ENCODE measurements at regions of chr11 and their contacts with region 1.

Region 1: GRCh38 chr11:9015677-9016076 is 11.9 kb upstream of the NRIP3 start:
- DNase-seq: peak; percentile 65
- H3K4me3 Mint-ChIP-seq: no peak overlapping the region
- H3K27ac Mint-ChIP-seq: no peak overlapping the region
- H3K4me1 Mint-ChIP-seq: peaks cover 24% of the 10 kb centered on the region
- H3K27me3 Mint-ChIP-seq: peaks cover 14% of the 10 kb centered on the region

Region 2: DNA sequence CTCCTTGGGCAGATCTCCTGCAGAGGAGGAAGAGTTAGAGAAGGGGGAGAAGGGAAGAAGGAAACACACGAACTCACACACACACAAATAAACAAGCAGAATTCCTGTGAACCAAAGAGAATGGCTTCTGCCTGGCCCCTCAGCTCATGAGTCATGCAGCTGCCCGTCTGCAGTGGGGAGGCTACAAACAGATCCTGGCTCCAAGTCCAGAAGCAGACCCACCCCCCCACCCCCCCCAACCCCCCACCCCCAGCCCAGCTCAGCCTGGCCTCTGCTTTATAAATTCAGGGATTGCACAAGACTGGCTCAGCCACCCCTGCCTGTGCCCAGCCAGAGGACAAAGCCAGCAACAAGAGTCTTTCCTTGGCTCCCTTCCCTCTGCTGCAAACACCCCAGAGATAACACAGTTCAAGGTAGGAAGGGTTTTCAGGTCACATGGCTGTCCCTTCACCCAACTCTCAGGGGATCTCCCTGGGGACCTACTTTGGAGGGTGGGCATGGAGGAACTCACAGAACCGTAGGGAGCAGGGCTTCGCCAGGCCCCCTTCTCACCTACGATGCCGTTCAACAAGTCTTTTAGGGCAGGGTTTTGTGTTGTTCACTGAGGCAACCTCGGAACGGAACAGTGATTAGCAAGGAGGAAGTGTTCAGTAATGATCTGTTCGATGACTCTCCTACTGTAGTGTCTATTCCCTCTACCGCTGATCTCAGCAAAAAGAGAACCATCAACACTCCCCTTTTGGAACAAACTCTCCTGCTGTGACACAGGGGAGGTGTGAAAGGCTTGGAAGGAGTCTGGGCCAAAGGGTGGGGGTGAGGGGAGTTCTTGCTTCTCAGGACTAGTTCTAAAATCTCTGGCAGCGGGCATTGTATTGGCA is 297.6 kb before region 1 on chr11:
- CTCF ChIA-PET with region 1: no interaction called
- POLR2A ChIA-PET with region 1: no interaction called
- DNase-seq: no peak
- H3K4me3 Mint-ChIP-seq: no peak overlapping the region
- H3K27ac Mint-ChIP-seq: no peak overlapping the region
- H3K4me1 Mint-ChIP-seq: no peaks in the 10 kb centered on the region
- H3K27me3 Mint-ChIP-seq: peaks cover 4% of the 10 kb centered on the region

Region 3: GRCh38 chr11:9003573-9004309 is 11.9 kb before region 1 on chr11 and contains the start of gene NRIP3:
- CTCF ChIA-PET with region 1: interaction called, 22 read pairs
- POLR2A ChIA-PET with region 1: interaction called, 4 read pairs
- DNase-seq: peak; percentile 78
- H3K4me3 Mint-ChIP-seq: peak within 1 kb of the TSS; percentile 64
- H3K27ac Mint-ChIP-seq: no peak within 1 kb of the TSS
- H3K4me1 Mint-ChIP-seq: peaks cover 27% of the 10 kb centered on the region
- H3K27me3 Mint-ChIP-seq: peaks cover 59% of the 10 kb centered on the region
- total RNA-seq, gene NRIP3: 1.9 to 2.4 TPM

Region 4: GRCh38 chr11:9092853-9093778 is 77.4 kb after region 1 on chr11:
- CTCF ChIA-PET with region 1: interaction called, 19 read pairs
- POLR2A ChIA-PET with region 1: interaction called, 3 read pairs
- DNase-seq: no peak
- H3K4me3 Mint-ChIP-seq: no peak overlapping the region
- H3K27ac Mint-ChIP-seq: no peak overlapping the region
- H3K4me1 Mint-ChIP-seq: peaks cover 8% of the 10 kb centered on the region
- H3K27me3 Mint-ChIP-seq: peaks cover 54% of the 10 kb centered on the region

Region 5: GRCh38 chr11:9150501-9150900 is 134.8 kb after region 1 on chr11:
- CTCF ChIA-PET with region 1: no interaction called
- POLR2A ChIA-PET with region 1: no interaction called
- DNase-seq: no peak
- H3K4me3 Mint-ChIP-seq: no peak overlapping the region
- H3K27ac Mint-ChIP-seq: no peak overlapping the region
- H3K4me1 Mint-ChIP-seq: peaks cover 3% of the 10 kb centered on the region
- H3K27me3 Mint-ChIP-seq: no peaks in the 10 kb centered on the region

Measured in activated CD4-positive, alpha-beta memory T cell treated with anti-CD3 and anti-CD28 coated beads, Interleukin-2, amount 10 ng/mL, durations not matched to agents 7 days and 5 days (primary cell).